Sigmoid colon (tissue), 7 donors: ENCODE measurements at regions of chr17 and their contacts with region 1.

Region 1: GRCh38 chr17:45277216-45277849 is 15.4 kb upstream of the SPATA32 start:
- DNase-seq: peak; percentile 96
- H3K4me3 ChIP-seq: no peak overlapping the region
- H3K27ac ChIP-seq: peak overlapping the region; percentile 67 to 98 (median 92)
- H3K4me1 ChIP-seq: peaks cover 0 to 60% (median 51%) of the 10 kb centered on the region in 4 donors
- H3K27me3 ChIP-seq: no peaks in the 10 kb centered on the region
- CTCF ChIP-seq: peak; percentile 71 to 95 (median 94)
- EP300 ChIP-seq: no peak
- POLR2A ChIP-seq: no peak

Region 2: GRCh38 chr17:45218895-45219661 is 58.3 kb before region 1 on chr17:
- intact Hi-C with region 1: loop called (anchors 5 kb)
- DNase-seq: peak; percentile 90
- H3K4me3 ChIP-seq: no peak overlapping the region
- H3K27ac ChIP-seq: no peak overlapping the region
- H3K4me1 ChIP-seq: peaks cover 0 to 20% (median 14%) of the 10 kb centered on the region in 4 donors
- H3K27me3 ChIP-seq: peaks cover 7 to 31% (median 18%) of the 10 kb centered on the region in 3 donors
- CTCF ChIP-seq: peak; percentile 90 to 99 (median 96)
- EP300 ChIP-seq: no peak
- POLR2A ChIP-seq: no peak

Region 3: GRCh38 chr17:45235416-45236281 is 41.7 kb before region 1 on chr17:
- intact Hi-C with region 1: no loop called
- DNase-seq: peak; percentile 88
- H3K4me3 ChIP-seq: no peak overlapping the region
- H3K27ac ChIP-seq: no peak overlapping the region
- H3K4me1 ChIP-seq: peaks cover 0 to 6% (median 2%) of the 10 kb centered on the region in 4 donors
- H3K27me3 ChIP-seq: peaks cover 4 to 37% (median 10%) of the 10 kb centered on the region in 3 donors
- CTCF ChIP-seq: peak; percentile 55 to 71 (median 62)
- EP300 ChIP-seq: no peak
- POLR2A ChIP-seq: no peak

Region 4: DNA sequence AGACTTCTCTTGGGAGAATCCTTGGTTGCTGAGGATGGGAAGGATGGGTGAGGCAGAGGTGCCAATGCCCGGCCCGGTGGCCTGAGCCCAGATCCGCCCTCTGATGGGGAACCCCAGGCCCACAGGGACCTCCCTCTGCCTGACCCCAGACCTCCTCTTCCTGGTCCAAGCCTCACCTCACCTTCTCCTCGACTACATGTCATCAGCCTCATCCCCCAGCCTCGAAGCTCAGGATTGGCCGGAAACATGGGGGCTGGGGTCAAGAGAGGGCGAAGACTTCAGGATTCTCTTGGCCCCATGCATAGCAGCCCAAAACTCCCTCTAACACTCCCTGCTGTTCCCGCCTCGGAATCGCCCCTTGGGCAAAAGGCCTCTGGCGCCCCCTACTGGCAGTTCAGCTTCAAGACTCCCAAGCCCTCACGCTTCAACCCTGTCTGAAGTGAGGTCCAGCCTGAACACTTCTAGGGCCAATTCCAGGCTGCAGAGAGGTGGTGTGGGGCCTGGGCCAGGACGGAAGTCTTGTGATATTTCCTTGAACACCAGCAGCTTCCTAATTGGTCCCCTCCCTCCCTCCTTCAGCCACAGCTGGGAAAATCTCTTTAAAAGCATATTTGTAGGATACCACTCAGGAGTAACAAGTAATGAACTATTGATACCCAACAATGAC is 108.1 kb after region 1 on chr17:
- intact Hi-C with region 1: loop called (anchors 1 kb)
- DNase-seq: peak; percentile 93
- H3K4me3 ChIP-seq: no peak overlapping the region
- H3K27ac ChIP-seq: no peak overlapping the region
- H3K4me1 ChIP-seq: peaks cover 0 to 6% (median 5%) of the 10 kb centered on the region in 4 donors
- H3K27me3 ChIP-seq: no peaks in the 10 kb centered on the region
- CTCF ChIP-seq: peak; percentile 96 to 98 (median 97)
- EP300 ChIP-seq: no peak
- POLR2A ChIP-seq: no peak